HCT116 (cell line): ENCODE measurements at regions of chr22 and their contacts with region 1.

Region 1: DNA sequence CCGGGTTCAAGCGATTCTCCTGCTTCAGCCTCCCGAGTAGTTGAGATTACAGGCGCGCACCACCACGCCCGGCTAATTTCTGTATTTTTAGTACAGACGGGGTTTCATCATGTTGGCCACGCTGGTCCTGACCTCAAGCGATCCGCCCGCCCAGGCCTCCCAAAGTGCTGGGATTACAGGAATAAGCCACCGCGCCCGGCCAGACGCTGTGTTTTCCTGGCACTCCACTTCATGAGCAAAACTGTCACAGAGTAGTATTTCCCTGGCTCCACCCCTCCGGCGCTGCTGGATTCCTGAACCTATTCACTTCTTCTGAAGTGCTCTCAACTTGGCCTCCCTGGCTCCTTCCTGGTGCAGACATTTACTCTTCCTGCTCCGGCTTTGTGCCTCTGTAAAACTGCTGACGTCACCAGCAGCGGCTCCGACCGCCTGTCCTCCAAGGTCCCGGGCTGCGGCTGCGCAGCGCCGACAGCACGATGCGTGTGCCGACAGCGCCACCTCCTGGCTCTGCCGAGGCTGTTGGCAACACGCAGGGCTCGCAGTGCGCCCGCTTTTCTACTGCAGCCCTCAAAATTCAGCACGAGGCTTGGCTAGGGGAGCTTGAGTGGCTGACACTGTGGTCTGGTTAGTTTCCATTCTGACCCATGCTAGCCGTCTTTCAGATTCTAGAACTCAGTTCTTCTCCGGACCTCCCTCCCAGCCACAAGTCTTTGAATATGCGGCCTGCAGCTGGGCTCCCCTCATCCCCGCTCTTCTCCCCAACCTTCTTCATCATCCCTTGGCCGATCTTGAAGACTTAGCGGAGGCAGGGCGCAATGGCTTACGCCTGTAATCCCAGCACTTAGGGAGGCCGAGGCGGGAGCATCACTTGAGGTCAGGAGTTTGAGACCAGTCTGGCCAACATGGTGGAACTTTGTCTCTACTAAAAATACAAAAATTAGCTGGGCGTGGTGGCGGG is 36.6 kb downstream of the APOL3 start:
- DNase-seq: peak; percentile 83
- ATAC-seq: peak; percentile 98
- H3K4me3 ChIP-seq: peak overlapping the region in 1 of 2 experiments; percentile 33; a peak in 1 of 4 replicates
- H3K27ac ChIP-seq: peak overlapping the region; percentile 17; the same call in 1 of the 2 replicates
- H3K4me1 ChIP-seq: peaks cover 2 to 10% of the 10 kb centered on the region in 2 experiments; a peak in 3 of 4 replicates
- H3K27me3 ChIP-seq: peaks cover 3% of the 10 kb centered on the region
- CTCF ChIP-seq: peak; percentile 93 to 98 (median 96)
- POLR2A ChIP-seq: peak; percentile 33
- RAD21 ChIP-seq: peak; percentile 99

Region 2: GRCh38 chr22:35350539-35351503 is 773.1 kb before region 1 on chr22:
- CTCF ChIA-PET with region 1: interaction called, 6 read pairs
- POLR2A ChIA-PET with region 1: no interaction called
- RAD21 ChIA-PET with region 1: no interaction called
- intact Hi-C with region 1: loop called (anchors 1 kb)
- DNase-seq: peak; percentile 81
- ATAC-seq: peak; percentile 99
- H3K4me3 ChIP-seq: peak overlapping the region; percentile 20 to 47; a peak in 3 of 4 replicates
- H3K27ac ChIP-seq: peak overlapping the region; percentile 34; the same call in 1 of the 2 replicates
- H3K4me1 ChIP-seq: peaks cover 2 to 27% of the 10 kb centered on the region in 2 experiments; a peak in 3 of 4 replicates
- H3K27me3 ChIP-seq: no peaks in the 10 kb centered on the region
- CTCF ChIP-seq: peak; percentile 54 to 75 (median 70)
- POLR2A ChIP-seq: peak; percentile 28
- RAD21 ChIP-seq: peak; percentile 97

Region 3: DNA sequence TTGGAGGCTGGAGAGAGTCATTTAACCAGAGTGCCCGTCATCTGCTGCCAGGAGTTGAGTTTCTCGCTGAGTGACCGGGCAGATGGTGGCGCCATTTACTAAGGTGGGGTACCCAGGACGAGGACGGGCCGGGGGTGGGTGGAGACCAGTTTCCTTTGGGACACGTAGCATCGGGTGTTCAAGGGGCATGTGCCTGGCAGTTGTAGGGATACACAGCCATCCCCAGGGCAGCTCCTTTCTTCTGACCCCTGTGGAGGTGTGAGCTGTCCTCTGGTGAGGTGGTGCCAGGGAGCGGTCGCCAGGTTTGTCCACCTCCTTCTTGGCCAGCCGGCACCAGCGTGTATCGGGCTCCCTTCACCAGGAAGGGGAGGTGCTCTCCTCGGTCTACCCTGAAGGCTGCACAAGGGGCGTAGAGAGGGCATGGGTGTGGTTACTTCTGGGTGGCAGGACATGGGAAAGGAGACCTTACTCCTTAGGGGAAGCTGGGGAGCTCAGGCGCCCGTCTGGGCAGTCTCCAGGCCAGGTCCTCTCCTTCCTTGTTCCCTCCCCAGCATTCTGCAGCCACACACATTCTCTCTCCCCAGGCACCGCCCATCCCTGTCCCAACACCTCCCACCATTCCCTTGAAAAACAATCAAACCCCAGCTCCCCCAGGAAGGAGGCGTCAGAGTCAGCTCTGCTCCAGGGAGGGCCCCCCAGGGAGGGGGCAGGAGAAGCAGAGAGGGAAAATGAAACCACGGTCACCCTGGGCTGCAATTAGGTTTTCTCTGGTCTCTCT is 496.5 kb before region 1 on chr22:
- CTCF ChIA-PET with region 1: interaction called, 13 read pairs
- POLR2A ChIA-PET with region 1: interaction called, 3 read pairs
- RAD21 ChIA-PET with region 1: interaction called, 3 to 7 read pairs
- intact Hi-C with region 1: loop called (anchors 2 kb)
- DNase-seq: peak; percentile 69
- ATAC-seq: peak; percentile 68
- H3K4me3 ChIP-seq: peak overlapping the region; percentile 54 to 60
- H3K27ac ChIP-seq: peak overlapping the region; percentile 89
- H3K4me1 ChIP-seq: peaks cover 41 to 67% of the 10 kb centered on the region in 2 experiments
- H3K27me3 ChIP-seq: no peaks in the 10 kb centered on the region
- CTCF ChIP-seq: peak; percentile 29 to 92 (median 61); a peak in 5 of 6 replicates
- POLR2A ChIP-seq: peak; percentile 39
- RAD21 ChIP-seq: peak; percentile 97

Region 4: DNA sequence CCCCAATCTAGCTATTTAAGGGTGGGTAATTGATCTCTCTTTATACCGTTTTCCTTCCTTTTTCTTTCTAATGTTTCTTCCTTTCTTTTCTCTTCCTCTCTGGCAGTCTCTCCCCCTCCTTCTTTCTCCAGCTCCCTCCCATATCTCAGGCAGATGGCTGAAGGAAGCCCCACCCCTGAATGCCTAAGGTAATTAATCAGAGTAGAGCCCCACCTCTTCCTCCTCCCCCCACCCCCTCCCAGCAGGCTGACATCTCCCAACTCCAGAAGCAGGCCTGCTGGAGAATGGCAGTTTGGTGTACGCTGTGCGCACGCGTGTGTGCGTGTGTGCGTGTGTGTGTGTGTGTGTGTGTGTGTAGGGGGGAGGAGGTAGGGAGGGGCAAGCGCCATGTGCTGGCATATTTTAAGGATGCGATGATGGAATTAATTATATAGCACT is 283.6 kb before region 1 on chr22:
- CTCF ChIA-PET with region 1: no interaction called
- POLR2A ChIA-PET with region 1: no interaction called
- RAD21 ChIA-PET with region 1: no interaction called
- intact Hi-C with region 1: loop called (anchors 1 kb)
- DNase-seq: peak; percentile 95
- ATAC-seq: peak; percentile 90
- H3K4me3 ChIP-seq: peak overlapping the region; percentile 53 to 69
- H3K27ac ChIP-seq: peak overlapping the region; percentile 46; the same call in 1 of the 2 replicates
- H3K4me1 ChIP-seq: peaks cover 46 to 75% of the 10 kb centered on the region in 2 experiments
- H3K27me3 ChIP-seq: no peaks in the 10 kb centered on the region
- CTCF ChIP-seq: no peak
- POLR2A ChIP-seq: no peak
- RAD21 ChIP-seq: peak; percentile 15; the same call in 1 of the 2 replicates

Region 5: GRCh38 chr22:36065775-36066559 is 58.0 kb before region 1 on chr22:
- CTCF ChIA-PET with region 1: interaction called, 10 read pairs
- POLR2A ChIA-PET with region 1: no interaction called
- RAD21 ChIA-PET with region 1: no interaction called
- intact Hi-C with region 1: loop called (anchors 2 kb)
- DNase-seq: peak; percentile 91
- ATAC-seq: peak; percentile 93
- H3K4me3 ChIP-seq: peak overlapping the region; percentile 62 to 64
- H3K27ac ChIP-seq: peak overlapping the region; percentile 64
- H3K4me1 ChIP-seq: peaks cover 4 to 21% of the 10 kb centered on the region in 2 experiments; a peak in 3 of 4 replicates
- H3K27me3 ChIP-seq: no peaks in the 10 kb centered on the region
- CTCF ChIP-seq: peak; percentile 99 to 100 (median 100)
- POLR2A ChIP-seq: no peak
- RAD21 ChIP-seq: peak; percentile 84

Region 6: GRCh38 chr22:36211237-36211861 is 87.4 kb after region 1 on chr22:
- CTCF ChIA-PET with region 1: no interaction called
- POLR2A ChIA-PET with region 1: no interaction called
- RAD21 ChIA-PET with region 1: no interaction called
- intact Hi-C with region 1: no loop called
- DNase-seq: no peak
- ATAC-seq: no peak
- H3K4me3 ChIP-seq: no peak overlapping the region
- H3K27ac ChIP-seq: no peak overlapping the region
- H3K4me1 ChIP-seq: no peaks in the 10 kb centered on the region
- H3K27me3 ChIP-seq: peaks cover 16% of the 10 kb centered on the region
- CTCF ChIP-seq: no peak
- POLR2A ChIP-seq: no peak
- RAD21 ChIP-seq: no peak

Region 7: GRCh38 chr22:36470162-36470993 is 346.4 kb after region 1 on chr22:
- CTCF ChIA-PET with region 1: no interaction called
- POLR2A ChIA-PET with region 1: no interaction called
- RAD21 ChIA-PET with region 1: no interaction called
- intact Hi-C with region 1: no loop called
- DNase-seq: peak; percentile 60
- ATAC-seq: peak; percentile 55
- H3K4me3 ChIP-seq: no peak overlapping the region
- H3K27ac ChIP-seq: peak overlapping the region; percentile 31; the same call in 1 of the 2 replicates
- H3K4me1 ChIP-seq: peaks cover 45 to 51% of the 10 kb centered on the region in 2 experiments
- H3K27me3 ChIP-seq: no peaks in the 10 kb centered on the region
- CTCF ChIP-seq: peak; percentile 85 to 96 (median 94)
- POLR2A ChIP-seq: no peak
- RAD21 ChIP-seq: peak; percentile 98